Right lobe of liver (tissue), 6 donors: ENCODE measurements at regions of chr17 and their contacts with region 1.

Region 1: GRCh38 chr17:43846221-43846712 is 709 bp upstream of the CD300LG start:
- DNase-seq: peak; percentile 84 to 86 (median 85)
- ATAC-seq: peak; percentile 99 to 100 (median 99)
- H3K4me3 ChIP-seq: no peak overlapping the region
- H3K27ac ChIP-seq: no peak overlapping the region
- H3K4me1 ChIP-seq: peaks cover 0 to 11% (median 2%) of the 10 kb centered on the region in 4 donors
- H3K27me3 ChIP-seq: no peaks in the 10 kb centered on the region
- CTCF ChIP-seq: peak; percentile 92 to 99 (median 98)
- POLR2A ChIP-seq: no peak

Region 2: DNA sequence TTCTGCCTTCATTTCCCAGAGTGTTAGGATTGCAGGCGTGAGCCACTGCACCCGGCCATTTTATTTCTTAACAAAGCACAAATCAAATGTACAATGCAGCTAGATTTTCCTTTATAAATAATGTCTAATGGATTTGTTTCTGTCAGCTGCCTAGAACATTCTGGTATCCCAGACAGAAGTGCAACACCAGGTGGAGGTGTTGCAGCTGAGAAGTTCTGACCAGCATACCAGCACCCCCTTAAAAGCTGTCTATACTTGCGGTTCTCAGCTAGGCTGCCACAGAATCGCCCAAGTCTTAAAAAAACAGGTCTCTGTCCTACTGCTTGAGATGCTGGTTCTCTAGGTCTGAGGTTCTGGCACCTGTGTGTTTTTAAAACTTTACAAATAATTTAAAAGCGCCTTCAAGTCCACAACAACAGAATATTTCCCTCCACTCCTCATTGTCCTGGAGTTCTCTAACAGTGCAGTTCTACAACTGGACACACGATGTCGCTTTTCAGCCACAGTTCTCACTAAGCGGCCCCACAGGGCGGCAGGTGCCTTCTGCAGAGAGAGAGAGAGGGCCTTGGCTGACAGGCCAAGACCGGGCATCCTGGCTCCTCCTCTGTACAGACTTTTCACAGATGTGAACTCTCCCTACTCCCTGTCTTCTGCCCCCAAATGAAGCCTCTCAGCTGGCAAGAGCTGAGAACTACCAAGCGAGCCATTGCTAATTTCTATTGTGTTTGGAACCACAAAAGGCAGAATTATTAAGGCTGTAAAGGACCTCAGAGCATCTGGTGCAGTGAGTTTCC is 152.0 kb before region 1 on chr17:
- intact Hi-C with region 1: loop called (anchors 10 kb)
- DNase-seq: peak; percentile 73 to 76 (median 74)
- ATAC-seq: peak; percentile 94 to 98 (median 96)
- H3K4me3 ChIP-seq: no peak overlapping the region
- H3K27ac ChIP-seq: no peak overlapping the region
- H3K4me1 ChIP-seq: no peaks in the 10 kb centered on the region
- H3K27me3 ChIP-seq: no peaks in the 10 kb centered on the region
- CTCF ChIP-seq: peak; percentile 89 to 94 (median 91)
- POLR2A ChIP-seq: no peak

Region 3: GRCh38 chr17:43779145-43780125 is 66.8 kb before region 1 on chr17:
- intact Hi-C with region 1: loop called in 1 of 2 experiments (anchors 10 kb)
- DNase-seq: no peak
- ATAC-seq: peak in 2 of 4 donors; percentile 0 to 11
- H3K4me3 ChIP-seq: peak overlapping the region; percentile 95 to 99 (median 98)
- H3K27ac ChIP-seq: peak overlapping the region; percentile 100
- H3K4me1 ChIP-seq: peaks cover 0 to 45% (median 16%) of the 10 kb centered on the region in 4 donors
- H3K27me3 ChIP-seq: no peaks in the 10 kb centered on the region
- CTCF ChIP-seq: peak in 2 of 4 donors; percentile 7 to 17
- POLR2A ChIP-seq: no peak

Region 4: GRCh38 chr17:43814714-43815113 is 31.6 kb before region 1 on chr17:
- intact Hi-C with region 1: no loop called
- DNase-seq: no peak
- ATAC-seq: no peak
- H3K4me3 ChIP-seq: no peak overlapping the region
- H3K27ac ChIP-seq: no peak overlapping the region
- H3K4me1 ChIP-seq: no peaks in the 10 kb centered on the region
- H3K27me3 ChIP-seq: no peaks in the 10 kb centered on the region
- CTCF ChIP-seq: no peak
- POLR2A ChIP-seq: no peak

Region 5: DNA sequence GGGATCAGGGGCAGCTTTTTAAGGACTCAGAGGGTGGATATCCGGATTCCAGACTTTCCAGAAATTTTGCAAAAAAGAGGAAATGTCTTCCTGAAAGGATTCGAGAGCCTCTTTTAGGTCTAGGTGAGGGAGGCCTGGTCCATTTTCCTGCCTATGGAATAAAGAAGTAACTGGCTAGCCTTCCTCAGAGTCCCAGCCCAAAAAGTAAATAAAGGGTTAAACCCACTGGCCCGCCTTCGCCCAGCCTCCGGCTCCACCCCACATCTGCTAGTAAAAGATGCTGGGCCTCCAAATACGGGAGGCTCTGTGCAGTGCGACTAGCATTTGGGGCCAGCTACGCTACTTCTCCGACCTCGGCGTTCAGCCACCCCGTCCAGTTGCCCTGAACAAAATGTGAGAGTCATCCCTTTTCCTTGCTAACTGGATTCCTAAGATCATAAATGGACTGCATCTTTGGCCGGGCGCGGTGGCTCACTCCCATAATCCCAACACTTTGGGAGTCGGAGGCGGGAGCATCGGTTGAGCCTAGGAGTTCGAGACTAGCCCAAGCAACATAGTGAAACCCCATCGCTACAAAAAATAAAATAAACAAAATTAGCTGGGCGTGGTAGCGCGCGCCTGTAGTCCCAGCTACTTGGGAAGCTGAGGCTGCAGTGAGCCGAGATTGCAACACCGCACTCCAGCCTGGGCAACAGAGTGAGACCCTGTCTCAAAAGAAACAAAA is 61.9 kb after region 1 on chr17:
- intact Hi-C with region 1: no loop called
- DNase-seq: no peak
- ATAC-seq: peak in 3 of 4 donors; percentile 20 to 33 (median 31)
- H3K4me3 ChIP-seq: no peak overlapping the region
- H3K27ac ChIP-seq: no peak overlapping the region
- H3K4me1 ChIP-seq: peaks cover 0 to 7% (median 0%) of the 10 kb centered on the region in 4 donors
- H3K27me3 ChIP-seq: peaks cover 10 to 14% of the 10 kb centered on the region in 2 donors
- CTCF ChIP-seq: no peak
- POLR2A ChIP-seq: no peak

Region 6: DNA sequence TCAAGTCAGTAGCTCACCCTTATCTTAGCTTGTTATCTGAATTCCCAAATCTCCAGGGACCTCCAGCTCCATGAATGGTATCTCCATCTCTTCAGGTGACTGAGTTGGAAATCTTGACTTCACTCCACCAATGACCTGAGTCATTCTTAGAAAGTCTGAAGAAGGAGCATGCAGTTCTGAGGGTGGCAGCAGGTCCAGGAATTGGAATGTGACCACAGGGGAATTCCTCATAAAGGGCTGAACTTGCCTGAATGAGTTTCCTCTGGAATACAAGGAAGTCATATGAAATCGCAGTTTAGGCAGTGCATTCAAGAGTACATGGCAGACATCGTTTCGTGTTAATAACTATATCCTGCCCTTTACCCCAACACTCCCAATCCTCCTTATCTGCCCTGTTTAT is 120.0 kb after region 1 on chr17:
- intact Hi-C with region 1: no loop called
- DNase-seq: no peak
- ATAC-seq: no peak
- H3K4me3 ChIP-seq: no peak overlapping the region
- H3K27ac ChIP-seq: no peak overlapping the region
- H3K4me1 ChIP-seq: no peaks in the 10 kb centered on the region
- H3K27me3 ChIP-seq: no peaks in the 10 kb centered on the region
- CTCF ChIP-seq: no peak
- POLR2A ChIP-seq: no peak